WTC11 (cell line): ENCODE measurements at regions of chr6 and their contacts with region 1.

Region 1: DNA sequence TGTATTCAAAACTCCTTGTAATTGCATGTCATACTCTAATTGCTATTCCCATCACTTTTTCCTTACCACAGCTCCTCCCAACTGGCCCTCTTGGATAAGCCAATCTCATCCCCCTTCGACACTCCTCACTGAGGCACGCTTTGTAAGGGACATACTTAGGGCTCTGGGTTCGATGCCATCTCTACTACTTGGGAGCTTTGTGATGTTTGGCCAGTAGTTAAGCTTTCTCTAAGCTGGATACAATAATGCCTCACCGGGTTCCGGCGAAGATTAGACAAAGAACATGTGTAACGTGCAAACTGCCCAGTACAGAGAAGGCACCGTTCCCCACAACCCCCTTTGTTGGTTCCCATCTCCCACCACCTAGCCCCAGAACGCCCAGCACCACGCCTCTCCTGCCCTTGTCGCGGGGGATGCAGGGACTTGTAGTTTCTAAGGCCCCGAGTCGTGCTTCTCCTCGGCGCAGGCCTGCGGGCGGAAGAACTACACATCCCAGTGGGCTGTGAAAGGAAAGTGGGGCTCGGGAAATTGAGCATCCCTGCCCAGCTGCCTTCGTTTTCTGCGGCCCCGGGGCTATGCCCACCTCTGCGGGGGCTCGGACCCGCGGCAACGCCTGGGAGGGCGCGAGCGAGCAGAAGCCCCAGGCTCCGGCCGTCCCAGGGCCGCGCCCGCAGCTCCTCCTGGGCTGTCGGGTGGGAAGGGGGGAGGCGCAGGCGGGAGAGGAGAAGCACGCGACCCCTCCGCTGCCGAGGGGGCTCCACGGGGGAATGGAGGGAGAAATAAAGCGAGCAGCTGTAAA is 1.1 kb upstream of the ZDHHC14 start:
- DNase-seq: peak; percentile 95
- ATAC-seq: peak; percentile 92
- H3K4me3 Mint-ChIP-seq: peak overlapping the region; percentile 66
- H3K27ac Mint-ChIP-seq: no peak overlapping the region
- H3K4me1 Mint-ChIP-seq: peaks cover 28% of the 10 kb centered on the region
- H3K27me3 Mint-ChIP-seq: peaks cover 32% of the 10 kb centered on the region
- CTCF ChIP-seq: no peak

Region 2: GRCh38 chr6:157323255-157323965 is 56.4 kb before region 1 on chr6 and contains the start of gene TMEM242:
- CTCF ChIA-PET with region 1: interaction called, 6 read pairs
- POLR2A ChIA-PET with region 1: interaction called, 10 read pairs
- DNase-seq: peak; percentile 93
- ATAC-seq: peak; percentile 95
- H3K4me3 Mint-ChIP-seq: peak within 1 kb of the TSS; percentile 98
- H3K27ac Mint-ChIP-seq: peak within 1 kb of the TSS; percentile 97
- H3K4me1 Mint-ChIP-seq: 0 out of 2 replicates have a peak, but pooled peaks cover 7% of the 10 kb centered on the region
- H3K27me3 Mint-ChIP-seq: peaks cover 16% of the 10 kb centered on the region
- CTCF ChIP-seq: no peak
- total RNA-seq, gene TMEM242: 8.7 to 11.5 TPM (median 11.0 TPM) in 3 replicates